Activated CD4-positive, alpha-beta T cell treated with anti-CD3 and anti-CD28 coated beads, Interleukin-2, amount 10 ng/mL, durations not matched to agents 24 days and 14 days (primary cell): ENCODE measurements at regions of chr20 and their contacts with region 1.

Region 1: GRCh38 chr20:36591854-36592641 is 13.5 kb upstream of the RAB5IF start:
- DNase-seq: peak; percentile 83
- H3K4me3 Mint-ChIP-seq: peak overlapping the region; percentile 65
- H3K27ac Mint-ChIP-seq: peak overlapping the region; percentile 77
- H3K4me1 Mint-ChIP-seq: peaks cover 53% of the 10 kb centered on the region
- H3K27me3 Mint-ChIP-seq: no peaks in the 10 kb centered on the region

Region 2: GRCh38 chr20:36550797-36551299 is 41.2 kb before region 1 on chr20:
- intact Hi-C with region 1: loop called (anchors 5 kb)
- DNase-seq: no peak
- H3K4me3 Mint-ChIP-seq: no peak overlapping the region
- H3K27ac Mint-ChIP-seq: no peak overlapping the region
- H3K4me1 Mint-ChIP-seq: no peaks in the 10 kb centered on the region
- H3K27me3 Mint-ChIP-seq: no peaks in the 10 kb centered on the region